ENCODE measurements at regions of chr20 and their contacts with region 1.

Region 1: GRCh38 chr20:35092524-35093266 is at the start of gene TRPC4AP:
- DNase-seq: no peak
- H3K4me3 ChIP-seq: peak within 1 kb of the TSS; percentile 83
- CTCF ChIP-seq: peak; percentile 93

Region 2: GRCh38 chr20:34850969-34851368 is 241.7 kb before region 1 on chr20:
- CTCF ChIA-PET with region 1: no interaction called
- POLR2A ChIA-PET with region 1: no interaction called
- DNase-seq: no peak
- H3K4me3 ChIP-seq: no peak overlapping the region
- CTCF ChIP-seq: no peak

Region 3: GRCh38 chr20:35104685-35105295 is 12.1 kb after region 1 on chr20:
- CTCF ChIA-PET with region 1: interaction called, 159 read pairs
- POLR2A ChIA-PET with region 1: no interaction called
- DNase-seq: no peak
- H3K4me3 ChIP-seq: no peak overlapping the region
- CTCF ChIP-seq: no peak

Region 4: GRCh38 chr20:35129647-35130069 is 37.0 kb after region 1 on chr20:
- CTCF ChIA-PET with region 1: interaction called, 10 read pairs
- POLR2A ChIA-PET with region 1: no interaction called
- DNase-seq: no peak
- H3K4me3 ChIP-seq: no peak overlapping the region
- CTCF ChIP-seq: no peak

Region 5: GRCh38 chr20:35166242-35166830 is 73.6 kb after region 1 on chr20:
- CTCF ChIA-PET with region 1: interaction called, 14 read pairs
- POLR2A ChIA-PET with region 1: no interaction called
- DNase-seq: no peak
- H3K4me3 ChIP-seq: no peak overlapping the region
- CTCF ChIP-seq: no peak

Region 6: GRCh38 chr20:35215066-35215956 is 122.6 kb after region 1 on chr20:
- CTCF ChIA-PET with region 1: interaction called, 119 read pairs
- POLR2A ChIA-PET with region 1: no interaction called
- DNase-seq: peak; percentile 29
- H3K4me3 ChIP-seq: no peak overlapping the region
- CTCF ChIP-seq: no peak

Region 7: GRCh38 chr20:35277531-35278395 is 185.1 kb after region 1 on chr20 and contains the start of gene MMP24OS:
- CTCF ChIA-PET with region 1: interaction called, 109 read pairs
- POLR2A ChIA-PET with region 1: interaction called, 3 read pairs
- DNase-seq: no peak
- H3K4me3 ChIP-seq: peak within 1 kb of the TSS; percentile 83
- CTCF ChIP-seq: peak; percentile 48

Measured in AG04449 (cell line).